ENCODE measurements at regions of chr3 and their contacts with region 1.

Region 1: GRCh38 chr3:157618075-157618760 is 115.0 kb upstream of the VEPH1 start:
- DNase-seq: no peak
- ATAC-seq: peak; percentile 55
- H3K4me3 ChIP-seq: no peak overlapping the region
- H3K27ac ChIP-seq: no peak overlapping the region
- H3K4me1 ChIP-seq: no peaks in the 10 kb centered on the region
- H3K27me3 ChIP-seq: no peaks in the 10 kb centered on the region

Region 2: GRCh38 chr3:158109804-158110657 is 491.8 kb after region 1 on chr3 and contains the start of gene RSRC1:
- intact Hi-C with region 1: loop called in 1 of 2 experiments (anchors 1 kb)
- DNase-seq: peak; percentile 91 to 94
- ATAC-seq: peak; percentile 94
- H3K4me3 ChIP-seq: peak within 1 kb of the TSS; percentile 89 to 92
- H3K27ac ChIP-seq: peak within 1 kb of the TSS in 1 of 2 donors; percentile 11
- H3K4me1 ChIP-seq: no peaks in the 10 kb centered on the region
- H3K27me3 ChIP-seq: no peaks in the 10 kb centered on the region
- total RNA-seq, gene RSRC1: 30.7 to 39.4 TPM

Region 3: DNA sequence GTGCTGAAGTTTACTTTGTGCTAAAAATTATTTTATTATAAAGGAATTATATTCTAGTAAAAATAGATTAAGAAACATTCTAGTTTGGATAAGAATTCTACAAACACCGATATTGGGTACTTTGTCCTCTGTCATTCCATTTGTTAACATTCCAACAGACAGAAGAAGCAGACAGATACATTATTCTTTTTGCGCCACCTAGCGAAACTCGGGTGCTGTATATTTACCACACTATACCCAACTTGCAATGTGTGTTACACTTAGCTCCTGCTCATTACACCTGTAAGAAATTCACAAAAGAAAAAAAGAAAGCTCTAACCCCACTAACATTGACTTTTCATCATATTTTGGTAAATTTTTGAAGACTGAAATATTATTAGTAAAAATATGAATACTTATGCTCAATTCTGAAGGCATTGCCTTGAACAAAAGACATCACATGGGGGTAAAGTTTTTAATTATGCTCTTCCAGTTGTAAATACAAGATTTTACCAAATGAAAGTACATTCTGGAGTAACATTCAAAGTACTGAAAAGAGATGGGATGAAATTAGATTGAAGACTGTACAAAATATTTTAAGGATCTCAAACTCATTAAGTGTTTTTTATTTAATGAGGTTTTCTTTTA is 816.3 kb after region 1 on chr3:
- intact Hi-C with region 1: loop called (anchors 2 to 5 kb)
- DNase-seq: peak in 1 of 2 donors; percentile 47
- ATAC-seq: no peak
- H3K4me3 ChIP-seq: no peak overlapping the region
- H3K27ac ChIP-seq: no peak overlapping the region
- H3K4me1 ChIP-seq: no peaks in the 10 kb centered on the region
- H3K27me3 ChIP-seq: no peaks in the 10 kb centered on the region

Region 4: GRCh38 chr3:158539414-158540014 is 921.3 kb after region 1 on chr3:
- intact Hi-C with region 1: loop called in 1 of 2 experiments (anchors 10 kb)
- DNase-seq: peak in 1 of 2 donors; percentile 42
- ATAC-seq: no peak
- H3K4me3 ChIP-seq: no peak overlapping the region
- H3K27ac ChIP-seq: no peak overlapping the region
- H3K4me1 ChIP-seq: no peaks in the 10 kb centered on the region
- H3K27me3 ChIP-seq: no peaks in the 10 kb centered on the region

Measured in aorta (tissue), 5 donors.